ENCODE measurements at regions of chr19 and their contacts with region 1.

Region 1: DNA sequence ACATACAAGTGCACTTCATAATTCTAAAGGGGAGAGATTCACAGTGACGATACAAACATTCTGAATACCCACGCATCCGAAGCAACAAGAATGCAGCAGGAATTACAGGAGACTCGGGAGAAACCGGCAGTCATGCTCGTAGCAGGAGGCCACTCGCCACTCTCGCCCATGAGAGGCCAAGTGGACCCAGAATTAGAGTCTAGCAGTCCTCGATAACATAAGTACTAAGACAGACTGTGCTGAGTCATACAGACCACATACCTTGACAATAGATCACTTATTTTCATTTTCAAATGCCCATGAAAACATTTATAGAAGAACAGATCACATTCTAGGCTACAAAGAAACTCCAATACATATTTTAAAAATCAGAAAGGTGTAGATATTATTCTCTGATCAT is 299.1 kb upstream of the TSHZ3 start:
- DNase-seq: no peak
- H3K4me3 ChIP-seq: no peak overlapping the region
- H3K27ac ChIP-seq: no peak overlapping the region
- H3K4me1 ChIP-seq: no peaks in the 10 kb centered on the region
- H3K27me3 ChIP-seq: no peaks in the 10 kb centered on the region
- CTCF ChIP-seq: no peak

Region 2: GRCh38 chr19:31616031-31616430 is 32.3 kb before region 1 on chr19:
- intact Hi-C with region 1: loop called (anchors 1 kb)
- DNase-seq: no peak
- H3K4me3 ChIP-seq: no peak overlapping the region
- H3K27ac ChIP-seq: no peak overlapping the region
- H3K4me1 ChIP-seq: no peaks in the 10 kb centered on the region
- H3K27me3 ChIP-seq: no peaks in the 10 kb centered on the region
- CTCF ChIP-seq: no peak

Region 3: GRCh38 chr19:31666136-31666535 is 17.8 kb after region 1 on chr19:
- intact Hi-C with region 1: no loop called
- DNase-seq: no peak
- H3K4me3 ChIP-seq: no peak overlapping the region
- H3K27ac ChIP-seq: no peak overlapping the region
- H3K4me1 ChIP-seq: no peaks in the 10 kb centered on the region
- H3K27me3 ChIP-seq: no peaks in the 10 kb centered on the region
- CTCF ChIP-seq: no peak